ENCODE measurements at regions of chr6 and their contacts with region 1.

Region 1: DNA sequence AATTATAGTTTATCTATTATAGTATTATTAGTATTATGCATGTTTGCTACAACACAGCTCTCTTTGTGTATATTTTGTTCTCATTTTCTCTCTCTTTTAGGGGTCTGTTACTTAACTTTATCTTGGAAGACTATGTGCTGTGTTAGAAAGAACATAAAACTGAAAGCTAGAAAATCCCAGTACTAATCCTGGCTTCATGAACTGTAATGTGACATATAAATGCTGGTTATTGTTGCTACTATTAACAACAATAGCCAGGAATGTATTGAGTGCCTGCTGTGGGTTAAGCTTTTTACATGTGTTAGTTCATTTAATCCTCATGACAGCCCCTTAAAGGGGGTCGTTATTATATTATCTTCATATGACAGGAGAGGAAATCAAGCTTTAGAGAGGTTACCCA is 170.0 kb upstream of the DTNBP1 start:
- DNase-seq: no peak
- ATAC-seq: no peak
- H3K4me3 ChIP-seq: no peak overlapping the region
- H3K27ac ChIP-seq: no peak overlapping the region
- H3K4me1 ChIP-seq: no peaks in the 10 kb centered on the region
- H3K27me3 ChIP-seq: no peaks in the 10 kb centered on the region
- CTCF ChIP-seq: no peak
- EP300 ChIP-seq: no peak
- POLR2A ChIP-seq: no peak
- RAD21 ChIP-seq: no peak

Region 2: DNA sequence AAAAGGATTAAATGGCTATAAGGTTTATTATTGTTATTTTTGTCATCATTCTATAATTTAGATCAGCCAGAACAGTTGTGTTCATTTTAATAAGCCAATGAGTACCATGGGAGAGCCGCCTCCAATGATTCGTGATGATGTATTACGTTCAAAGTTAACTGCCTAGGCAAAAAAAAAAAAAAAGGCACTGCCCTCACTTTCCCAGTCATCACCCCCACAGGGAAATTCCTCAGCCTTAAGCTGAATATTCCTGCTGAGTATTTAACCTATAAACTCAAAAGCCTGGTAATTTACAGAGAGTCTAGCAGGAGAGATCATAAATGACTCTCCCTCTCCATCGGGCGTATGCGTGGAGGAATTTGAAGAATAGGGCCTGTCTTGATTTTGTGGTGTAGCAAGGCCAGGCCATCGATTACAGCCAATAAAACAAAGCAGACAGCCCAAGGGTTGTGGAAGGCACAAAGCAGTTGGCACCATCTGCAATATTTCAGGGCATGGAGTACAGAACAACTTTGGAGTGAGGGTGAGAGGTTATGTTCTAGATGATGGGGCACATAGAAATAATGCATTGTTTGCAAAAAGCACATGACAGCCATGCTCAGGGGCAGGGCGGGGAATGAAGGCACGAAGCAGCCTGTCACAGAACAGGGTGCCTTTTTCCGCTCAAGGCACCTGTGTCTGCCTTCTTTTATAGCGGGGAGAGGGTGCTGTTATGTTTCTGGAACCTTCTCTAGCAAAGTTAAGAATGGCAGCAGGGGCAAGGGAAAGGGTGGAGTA is 31.8 kb before region 1 on chr6:
- CTCF ChIA-PET with region 1: no interaction called
- POLR2A ChIA-PET with region 1: no interaction called
- RAD21 ChIA-PET with region 1: no interaction called
- SMC1A ChIA-PET with region 1: no interaction called
- in situ Hi-C with region 1: no loop called
- intact Hi-C with region 1: no loop called
- DNase-seq: no peak
- ATAC-seq: no peak
- H3K4me3 ChIP-seq: no peak overlapping the region
- H3K27ac ChIP-seq: no peak overlapping the region
- H3K4me1 ChIP-seq: no peaks in the 10 kb centered on the region
- H3K27me3 ChIP-seq: no peaks in the 10 kb centered on the region
- CTCF ChIP-seq: no peak
- EP300 ChIP-seq: no peak
- POLR2A ChIP-seq: no peak
- RAD21 ChIP-seq: no peak

Region 3: GRCh38 chr6:15849395-15849794 is 16.6 kb after region 1 on chr6:
- CTCF ChIA-PET with region 1: interaction called, 10 read pairs
- POLR2A ChIA-PET with region 1: interaction called, 6 read pairs
- RAD21 ChIA-PET with region 1: interaction called, 9 read pairs
- SMC1A ChIA-PET with region 1: interaction called, 19 read pairs
- in situ Hi-C with region 1: no loop called
- intact Hi-C with region 1: no loop called
- DNase-seq: no peak
- ATAC-seq: no peak
- H3K4me3 ChIP-seq: no peak overlapping the region
- H3K27ac ChIP-seq: no peak overlapping the region
- H3K4me1 ChIP-seq: peaks cover 5% of the 10 kb centered on the region; the same call in 1 of the 2 replicates
- H3K27me3 ChIP-seq: no peaks in the 10 kb centered on the region; a peak in 1 of 4 replicates
- CTCF ChIP-seq: no peak
- EP300 ChIP-seq: no peak
- POLR2A ChIP-seq: no peak
- RAD21 ChIP-seq: no peak

Region 4: DNA sequence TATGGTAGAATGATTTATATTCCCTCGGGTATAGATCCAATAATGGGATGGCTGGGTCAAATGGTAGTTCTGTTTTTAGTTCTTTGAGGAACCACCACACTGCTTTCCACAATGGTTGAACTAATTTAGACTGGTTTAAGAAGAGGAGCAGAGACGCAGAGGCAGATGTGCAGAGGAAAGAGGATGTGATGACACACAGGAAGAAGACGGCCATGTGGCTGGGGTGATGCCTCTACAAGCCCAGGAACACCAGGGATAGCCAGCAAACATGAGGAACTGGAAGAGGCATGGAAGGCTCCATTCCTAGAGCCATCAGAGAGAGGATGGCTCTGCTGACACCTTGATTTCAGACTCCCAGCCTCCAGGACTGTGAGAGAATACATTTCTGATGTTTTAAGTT is 48.3 kb after region 1 on chr6:
- CTCF ChIA-PET with region 1: no interaction called
- POLR2A ChIA-PET with region 1: no interaction called
- RAD21 ChIA-PET with region 1: no interaction called
- SMC1A ChIA-PET with region 1: no interaction called
- in situ Hi-C with region 1: no loop called
- intact Hi-C with region 1: no loop called
- DNase-seq: no peak
- ATAC-seq: no peak
- H3K4me3 ChIP-seq: no peak overlapping the region
- H3K27ac ChIP-seq: no peak overlapping the region
- H3K4me1 ChIP-seq: peaks cover 16% of the 10 kb centered on the region
- H3K27me3 ChIP-seq: no peaks in the 10 kb centered on the region
- CTCF ChIP-seq: no peak
- EP300 ChIP-seq: no peak
- POLR2A ChIP-seq: no peak
- RAD21 ChIP-seq: no peak